ENCODE measurements at regions of chr15 and their contacts with region 1.

Region 1: DNA sequence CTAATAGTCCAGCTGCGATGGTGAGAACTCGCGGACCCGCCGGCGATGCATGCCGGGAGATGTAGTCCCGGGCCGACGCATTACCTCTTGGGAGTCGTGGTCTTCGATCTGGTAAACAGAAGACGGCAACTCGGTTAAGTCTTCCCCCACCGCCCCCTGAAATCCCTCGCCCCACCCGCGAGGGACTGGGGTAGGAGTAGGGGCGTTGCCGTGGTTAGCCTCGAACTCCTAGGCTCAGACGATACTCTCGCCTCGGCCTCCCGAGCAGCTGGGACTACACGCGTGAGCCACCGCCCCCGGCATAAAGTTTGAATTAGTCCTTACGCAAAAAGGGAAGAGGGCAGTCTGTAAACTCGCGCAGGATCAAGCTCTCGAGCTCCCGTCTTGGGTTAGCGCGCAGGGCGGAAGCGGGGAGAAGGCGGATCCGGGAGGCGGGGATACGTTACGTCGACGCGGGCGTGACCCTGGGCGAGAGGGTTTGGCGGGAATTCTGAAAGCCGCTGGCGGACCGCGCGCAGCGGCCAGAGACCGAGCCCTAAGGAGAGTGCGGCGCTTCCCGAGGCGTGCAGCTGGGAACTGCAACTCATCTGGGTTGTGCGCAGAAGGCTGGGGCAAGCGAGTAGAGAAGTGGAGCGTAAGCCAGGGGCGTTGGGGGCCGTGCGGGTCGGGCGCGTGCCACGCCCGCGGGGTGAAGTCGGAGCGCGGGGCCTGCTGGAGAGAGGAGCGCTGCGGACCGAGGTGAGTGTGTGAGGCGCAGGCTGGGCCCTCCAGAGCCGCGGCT is at the start of gene RAD51:
- DNase-seq: peak; percentile 91 to 95 (median 92)
- H3K4me3 ChIP-seq: peak within 1 kb of the TSS; percentile 67 to 81
- H3K4me3 Mint-ChIP-seq: peak within 1 kb of the TSS; percentile 96 to 100 (median 98)
- H3K27ac ChIP-seq: peak within 1 kb of the TSS; percentile 95
- H3K27ac Mint-ChIP-seq: peak within 1 kb of the TSS; percentile 96 to 99 (median 99)
- H3K4me1 ChIP-seq: peaks cover 13% of the 10 kb centered on the region
- H3K4me1 Mint-ChIP-seq: peaks cover 11 to 32% (median 19%) of the 10 kb centered on the region in 4 donors
- H3K27me3 ChIP-seq: no peaks in the 10 kb centered on the region
- H3K27me3 Mint-ChIP-seq: no peaks in the 10 kb centered on the region
- total RNA-seq, gene RAD51: 0.93 to 1.7 TPM

Region 2: GRCh38 chr15:40382580-40383456 is 312.1 kb before region 1 on chr15 and contains the start of gene KNSTRN:
- CTCF ChIA-PET with region 1: no interaction called
- POLR2A ChIA-PET with region 1: no interaction called
- intact Hi-C with region 1: no loop called
- DNase-seq: peak; percentile 90 to 95 (median 91)
- H3K4me3 ChIP-seq: peak within 1 kb of the TSS; percentile 67 to 88
- H3K4me3 Mint-ChIP-seq: peak within 1 kb of the TSS; percentile 92 to 99 (median 96)
- H3K27ac ChIP-seq: peak within 1 kb of the TSS; percentile 69
- H3K27ac Mint-ChIP-seq: peak within 1 kb of the TSS; percentile 71 to 93 (median 88)
- H3K4me1 ChIP-seq: peaks cover 11% of the 10 kb centered on the region
- H3K4me1 Mint-ChIP-seq: peaks cover 10 to 20% (median 16%) of the 10 kb centered on the region in 4 donors
- H3K27me3 ChIP-seq: no peaks in the 10 kb centered on the region
- H3K27me3 Mint-ChIP-seq: peaks cover 0 to 2% of the 10 kb centered on the region in 2 donors
- total RNA-seq, gene KNSTRN: 6.8 to 8.8 TPM

Region 3: DNA sequence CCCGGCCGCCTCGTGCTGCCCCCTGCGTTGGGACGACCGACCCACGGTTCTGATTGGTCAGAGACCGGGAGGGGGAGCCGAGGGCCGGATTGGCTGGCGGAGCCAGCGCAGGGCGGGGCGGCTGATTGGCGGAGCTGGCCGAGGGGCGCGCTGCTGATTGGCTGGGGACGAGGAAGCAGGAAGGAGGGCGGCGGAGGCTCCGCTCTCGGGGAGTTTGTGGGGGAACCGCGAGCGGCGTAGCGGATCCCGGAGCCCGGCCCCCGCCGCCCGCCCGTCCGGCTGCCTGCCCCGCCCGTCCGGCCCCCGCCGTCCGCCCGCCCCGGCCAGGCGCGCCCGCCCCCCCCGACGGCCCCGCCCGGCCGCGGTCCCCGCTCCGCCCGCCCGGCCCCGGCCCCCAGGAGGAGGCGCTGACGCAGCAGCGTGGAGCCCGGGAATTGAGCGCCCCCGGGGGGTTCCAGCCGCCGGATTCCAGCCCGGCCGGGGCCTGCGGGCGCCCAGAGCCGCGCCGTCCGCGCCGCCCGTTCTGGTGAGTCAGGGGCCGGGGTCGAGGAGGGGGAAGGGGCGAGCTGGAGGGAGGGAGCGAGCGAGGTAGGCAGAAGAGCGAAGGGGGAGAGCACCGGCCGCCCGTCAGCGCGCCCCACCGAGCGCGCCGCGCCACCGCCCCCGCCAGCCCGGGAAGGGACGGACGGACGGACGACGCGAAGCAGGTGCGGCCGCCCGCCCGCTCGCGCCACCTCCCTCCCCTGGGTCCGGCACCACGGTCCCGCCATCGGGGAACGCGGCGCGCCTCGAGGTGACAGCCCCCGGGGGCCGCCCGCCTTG is 253.9 kb before region 1 on chr15 and contains the start of gene BAHD1:
- CTCF ChIA-PET with region 1: no interaction called
- POLR2A ChIA-PET with region 1: interaction called, 10 read pairs
- intact Hi-C with region 1: no loop called
- DNase-seq: peak; percentile 89 to 93 (median 90)
- H3K4me3 ChIP-seq: peak within 1 kb of the TSS; percentile 62 to 65
- H3K4me3 Mint-ChIP-seq: peak within 1 kb of the TSS; percentile 91 to 96 (median 93)
- H3K27ac ChIP-seq: peak within 1 kb of the TSS; percentile 49
- H3K27ac Mint-ChIP-seq: peak within 1 kb of the TSS; percentile 87 to 94 (median 92)
- H3K4me1 ChIP-seq: peaks cover 67% of the 10 kb centered on the region
- H3K4me1 Mint-ChIP-seq: peaks cover 49 to 83% (median 60%) of the 10 kb centered on the region in 4 donors
- H3K27me3 ChIP-seq: peaks cover 12% of the 10 kb centered on the region
- H3K27me3 Mint-ChIP-seq: peaks cover 13% of the 10 kb centered on the region in 2 donors
- total RNA-seq, gene BAHD1: 47.0 to 49.2 TPM

Region 4: GRCh38 chr15:40593588-40594428 is 101.1 kb before region 1 on chr15 and contains the start of gene KNL1:
- CTCF ChIA-PET with region 1: interaction called, 9 read pairs
- POLR2A ChIA-PET with region 1: interaction called, 14 read pairs
- intact Hi-C with region 1: loop called (anchors 5 kb)
- DNase-seq: peak; percentile 89 to 93 (median 91)
- H3K4me3 ChIP-seq: peak within 1 kb of the TSS; percentile 36 to 94
- H3K4me3 Mint-ChIP-seq: peak within 1 kb of the TSS; percentile 93 to 100 (median 96)
- H3K27ac ChIP-seq: peak within 1 kb of the TSS; percentile 90
- H3K27ac Mint-ChIP-seq: peak within 1 kb of the TSS; percentile 96 to 100 (median 99)
- H3K4me1 ChIP-seq: peaks cover 31% of the 10 kb centered on the region
- H3K4me1 Mint-ChIP-seq: peaks cover 18 to 46% (median 31%) of the 10 kb centered on the region in 4 donors
- H3K27me3 ChIP-seq: no peaks in the 10 kb centered on the region
- H3K27me3 Mint-ChIP-seq: peaks cover 0 to 2% of the 10 kb centered on the region in 2 donors
- total RNA-seq, gene KNL1: 0.99 to 1.2 TPM

Region 5: GRCh38 chr15:40743921-40744814 is 49.3 kb after region 1 on chr15:
- CTCF ChIA-PET with region 1: interaction called, 6 read pairs
- POLR2A ChIA-PET with region 1: interaction called, 24 read pairs
- intact Hi-C with region 1: no loop called
- DNase-seq: peak; percentile 64 to 90 (median 73)
- H3K4me3 ChIP-seq: peak overlapping the region in 1 of 2 donors; percentile 6
- H3K4me3 Mint-ChIP-seq: peak overlapping the region; percentile 51 to 83 (median 68)
- H3K27ac ChIP-seq: peak overlapping the region; percentile 71
- H3K27ac Mint-ChIP-seq: peak overlapping the region; percentile 96 to 99 (median 97)
- H3K4me1 ChIP-seq: peaks cover 26% of the 10 kb centered on the region
- H3K4me1 Mint-ChIP-seq: peaks cover 10 to 20% (median 16%) of the 10 kb centered on the region in 4 donors
- H3K27me3 ChIP-seq: no peaks in the 10 kb centered on the region
- H3K27me3 Mint-ChIP-seq: no peaks in the 10 kb centered on the region

Region 6: DNA sequence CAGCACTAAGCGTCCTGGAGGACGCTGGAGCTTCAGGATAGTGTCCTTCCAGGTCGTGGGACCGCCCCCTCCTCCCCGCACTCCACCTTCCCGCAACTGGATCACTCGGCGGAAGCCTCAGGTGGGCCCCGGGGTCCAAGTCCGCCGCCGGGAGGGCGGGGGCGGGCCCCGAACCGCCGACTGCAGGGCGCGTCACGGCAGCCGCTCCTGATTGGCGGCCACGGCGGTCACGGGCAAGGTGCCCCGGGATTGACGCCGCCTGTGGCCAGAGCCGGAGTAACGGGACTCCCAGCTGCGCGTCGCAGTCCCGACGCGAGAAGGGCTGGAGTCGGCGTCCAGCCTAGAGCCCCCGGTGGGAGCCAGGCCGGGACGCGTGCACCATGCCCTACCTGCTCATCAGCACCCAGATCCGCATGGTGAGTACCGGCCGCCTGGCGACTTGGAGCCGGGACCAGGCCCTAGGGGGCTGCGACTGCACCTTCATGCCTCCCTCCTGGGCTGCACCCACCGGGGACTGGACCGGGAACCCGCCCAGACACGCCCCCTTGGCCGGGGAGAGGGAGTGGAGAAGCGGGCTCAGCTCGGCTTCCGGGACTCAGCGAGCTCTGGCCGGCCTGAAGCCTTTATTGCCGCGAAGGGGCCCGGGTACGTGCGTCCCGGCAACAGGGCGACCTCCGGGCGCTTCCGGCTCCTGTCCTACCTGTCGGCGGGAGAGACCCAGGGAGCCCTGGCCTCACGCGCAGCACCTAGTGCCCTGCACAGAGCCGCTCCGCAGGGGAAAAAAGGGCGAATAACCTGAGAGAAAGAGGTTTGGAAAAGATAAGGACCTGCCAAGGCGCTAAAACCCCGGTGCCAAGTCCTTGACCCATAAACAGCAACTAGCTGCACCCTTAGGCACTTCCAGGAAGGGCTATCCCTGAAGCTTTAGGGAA is 69.2 kb after region 1 on chr15 and contains the start of gene GCHFR:
- CTCF ChIA-PET with region 1: interaction called, 5 read pairs
- POLR2A ChIA-PET with region 1: interaction called, 46 read pairs
- intact Hi-C with region 1: no loop called
- DNase-seq: peak; percentile 63 to 74 (median 71)
- H3K4me3 ChIP-seq: peak within 1 kb of the TSS; percentile 61 to 81
- H3K4me3 Mint-ChIP-seq: peak within 1 kb of the TSS; percentile 87 to 93 (median 90)
- H3K27ac ChIP-seq: peak within 1 kb of the TSS; percentile 64
- H3K27ac Mint-ChIP-seq: peak within 1 kb of the TSS; percentile 85 to 96 (median 93)
- H3K4me1 ChIP-seq: peaks cover 28% of the 10 kb centered on the region
- H3K4me1 Mint-ChIP-seq: peaks cover 12 to 34% (median 24%) of the 10 kb centered on the region in 4 donors
- H3K27me3 ChIP-seq: no peaks in the 10 kb centered on the region
- H3K27me3 Mint-ChIP-seq: no peaks in the 10 kb centered on the region
- total RNA-seq, gene GCHFR: 21.2 to 24.1 TPM

Region 7: GRCh38 chr15:40807028-40807887 is 112.4 kb after region 1 on chr15 and contains the starts of genes DNAJC17 and ZFYVE19:
- CTCF ChIA-PET with region 1: interaction called, 3 read pairs
- POLR2A ChIA-PET with region 1: interaction called, 30 read pairs
- intact Hi-C with region 1: loop called (anchors 1 kb)
- DNase-seq: peak; percentile 90 to 97 (median 91)
- H3K4me3 ChIP-seq: peak within 1 kb of the TSS; percentile 95 to 100
- H3K4me3 Mint-ChIP-seq: peak within 1 kb of the TSS; percentile 96 to 100 (median 98)
- H3K27ac ChIP-seq: peak within 1 kb of the TSS; percentile 97
- H3K27ac Mint-ChIP-seq: peak within 1 kb of the TSS; percentile 92 to 100 (median 98)
- H3K4me1 ChIP-seq: peaks cover 20% of the 10 kb centered on the region
- H3K4me1 Mint-ChIP-seq: peaks cover 15 to 33% (median 22%) of the 10 kb centered on the region in 4 donors
- H3K27me3 ChIP-seq: no peaks in the 10 kb centered on the region
- H3K27me3 Mint-ChIP-seq: no peaks in the 10 kb centered on the region
- total RNA-seq, gene DNAJC17: 40.5 to 43.9 TPM
- total RNA-seq, gene ZFYVE19: 34.1 to 35.0 TPM